CD4-positive, alpha-beta memory T cell (primary cell): ENCODE measurements at regions of chr7 and their contacts with region 1.

Region 1: GRCh38 chr7:149284850-149285626 is 23.0 kb downstream of the ZNF783 start:
- DNase-seq: peak; percentile 96 to 98 (median 98)
- H3K4me3 ChIP-seq: peak overlapping the region; percentile 49 to 72
- H3K4me3 Mint-ChIP-seq: peak overlapping the region; percentile 80 to 96 (median 90)
- H3K27ac ChIP-seq: peak overlapping the region; percentile 57
- H3K27ac Mint-ChIP-seq: peak overlapping the region; percentile 87 to 93 (median 91)
- H3K4me1 ChIP-seq: peaks cover 38% of the 10 kb centered on the region
- H3K4me1 Mint-ChIP-seq: peaks cover 26 to 53% (median 40%) of the 10 kb centered on the region in 4 donors
- H3K27me3 ChIP-seq: no peaks in the 10 kb centered on the region
- H3K27me3 Mint-ChIP-seq: no peaks in the 10 kb centered on the region

Region 2: GRCh38 chr7:149209518-149210269 is 75.3 kb before region 1 on chr7:
- CTCF ChIA-PET with region 1: no interaction called
- POLR2A ChIA-PET with region 1: no interaction called
- intact Hi-C with region 1: loop called (anchors 2 kb)
- DNase-seq: peak; percentile 45 to 78 (median 52)
- H3K4me3 ChIP-seq: no peak overlapping the region
- H3K4me3 Mint-ChIP-seq: peak overlapping the region in 3 of 8 donors; percentile 21 to 58 (median 22)
- H3K27ac ChIP-seq: no peak overlapping the region
- H3K27ac Mint-ChIP-seq: peak overlapping the region; percentile 34 to 86 (median 66)
- H3K4me1 ChIP-seq: peaks cover 7% of the 10 kb centered on the region
- H3K4me1 Mint-ChIP-seq: peaks cover 5 to 15% (median 11%) of the 10 kb centered on the region in 4 donors
- H3K27me3 ChIP-seq: no peaks in the 10 kb centered on the region
- H3K27me3 Mint-ChIP-seq: no peaks in the 10 kb centered on the region

Region 3: DNA sequence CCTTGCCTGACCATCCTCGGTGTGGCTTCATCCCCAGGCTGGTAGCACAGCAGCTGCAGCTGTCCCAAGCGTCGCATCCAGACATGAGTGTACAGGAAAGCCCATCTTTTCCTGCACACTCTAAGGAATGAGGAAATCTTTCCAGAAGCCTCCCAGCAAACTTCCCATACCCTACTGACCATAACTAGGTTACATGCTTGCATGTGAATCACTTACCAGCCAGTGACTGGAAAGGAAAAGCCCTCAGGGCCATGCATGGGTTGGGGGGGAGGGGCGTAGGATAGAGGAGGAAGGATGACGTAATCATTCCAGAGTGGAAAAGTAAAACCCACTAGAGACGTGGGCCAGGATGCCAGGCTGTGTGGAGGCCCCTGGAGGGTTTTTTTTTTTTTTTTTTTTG is 64.5 kb before region 1 on chr7:
- CTCF ChIA-PET with region 1: no interaction called
- POLR2A ChIA-PET with region 1: no interaction called
- intact Hi-C with region 1: no loop called
- DNase-seq: no peak
- H3K4me3 ChIP-seq: no peak overlapping the region
- H3K4me3 Mint-ChIP-seq: no peak overlapping the region
- H3K27ac ChIP-seq: no peak overlapping the region
- H3K27ac Mint-ChIP-seq: no peak overlapping the region
- H3K4me1 ChIP-seq: no peaks in the 10 kb centered on the region
- H3K4me1 Mint-ChIP-seq: peaks cover 0 to 3% (median under 1%) of the 10 kb centered on the region in 4 donors
- H3K27me3 ChIP-seq: no peaks in the 10 kb centered on the region
- H3K27me3 Mint-ChIP-seq: no peaks in the 10 kb centered on the region

Region 4: GRCh38 chr7:149310113-149310836 is 25.2 kb after region 1 on chr7:
- CTCF ChIA-PET with region 1: interaction called, 18 read pairs
- POLR2A ChIA-PET with region 1: interaction called, 3 read pairs
- intact Hi-C with region 1: no loop called
- DNase-seq: peak in 4 of 5 donors; percentile 20 to 38 (median 23)
- H3K4me3 ChIP-seq: no peak overlapping the region
- H3K4me3 Mint-ChIP-seq: no peak overlapping the region
- H3K27ac ChIP-seq: no peak overlapping the region
- H3K27ac Mint-ChIP-seq: peak overlapping the region in 4 of 7 donors; percentile 0 to 70 (median 18)
- H3K4me1 ChIP-seq: no peaks in the 10 kb centered on the region
- H3K4me1 Mint-ChIP-seq: peaks cover 0 to 5% (median 3%) of the 10 kb centered on the region in 4 donors
- H3K27me3 ChIP-seq: no peaks in the 10 kb centered on the region
- H3K27me3 Mint-ChIP-seq: peaks cover 0 to 2% of the 10 kb centered on the region in 2 donors

Region 5: GRCh38 chr7:149430192-149430591 is 145.2 kb after region 1 on chr7:
- CTCF ChIA-PET with region 1: no interaction called
- POLR2A ChIA-PET with region 1: no interaction called
- intact Hi-C with region 1: no loop called
- DNase-seq: no peak
- H3K4me3 ChIP-seq: no peak overlapping the region
- H3K4me3 Mint-ChIP-seq: no peak overlapping the region
- H3K27ac ChIP-seq: no peak overlapping the region
- H3K27ac Mint-ChIP-seq: peak overlapping the region in 4 of 7 donors; percentile 24 to 49 (median 42)
- H3K4me1 ChIP-seq: no peaks in the 10 kb centered on the region
- H3K4me1 Mint-ChIP-seq: peaks cover 0 to 7% (median 3%) of the 10 kb centered on the region in 4 donors
- H3K27me3 ChIP-seq: no peaks in the 10 kb centered on the region
- H3K27me3 Mint-ChIP-seq: no peaks in the 10 kb centered on the region